ENCODE measurements at regions of chr1 and their contacts with region 1.

Region 1: DNA sequence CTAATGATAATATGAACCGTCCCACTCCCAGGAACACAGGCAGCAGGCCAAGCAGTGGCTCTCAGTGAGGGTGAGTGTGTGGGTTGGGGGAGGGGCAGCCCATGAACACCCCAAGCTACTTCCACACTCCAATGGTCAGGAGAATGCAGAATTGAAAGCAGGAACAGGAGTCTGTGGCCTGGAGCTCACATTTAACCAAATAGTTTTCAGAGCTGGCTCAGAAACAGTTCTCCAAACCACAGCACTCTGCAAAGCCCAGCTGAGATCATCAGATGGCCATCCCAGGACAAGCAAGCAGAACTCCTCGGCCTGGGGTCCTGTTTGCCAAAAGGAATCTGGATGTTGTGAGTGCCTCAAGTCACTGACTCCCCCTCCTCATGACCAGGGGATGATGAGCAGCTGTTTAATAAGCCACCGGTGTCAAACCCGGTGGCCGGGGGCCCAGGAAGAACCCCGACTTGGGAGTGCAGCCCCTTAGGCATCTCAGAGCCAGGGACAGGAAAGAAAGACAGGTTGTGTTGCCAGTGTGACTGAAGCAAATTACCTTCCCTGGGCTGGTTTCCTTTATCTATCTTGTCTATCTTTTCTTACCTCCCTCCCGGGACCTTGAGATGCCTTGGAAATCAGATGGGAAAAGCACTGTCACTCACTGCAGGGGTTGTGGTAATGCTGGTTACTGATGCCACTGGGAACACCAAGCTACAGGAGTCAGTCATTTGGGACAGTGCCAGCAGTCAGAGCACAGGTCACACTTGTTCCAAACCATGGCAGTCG is 20.4 kb downstream of the DEGS1 start:
- DNase-seq: peak; percentile 62
- H3K4me3 Mint-ChIP-seq: no peak overlapping the region
- H3K27ac Mint-ChIP-seq: no peak overlapping the region
- H3K4me1 Mint-ChIP-seq: peaks cover 21% of the 10 kb centered on the region
- H3K27me3 Mint-ChIP-seq: no peaks in the 10 kb centered on the region
- CTCF ChIP-seq: no peak

Region 2: GRCh38 chr1:224192082-224192788 is 11.2 kb before region 1 on chr1:
- CTCF ChIA-PET with region 1: interaction called, 4 read pairs
- POLR2A ChIA-PET with region 1: interaction called, 20 read pairs
- intact Hi-C with region 1: no loop called
- DNase-seq: no peak
- H3K4me3 Mint-ChIP-seq: no peak overlapping the region
- H3K27ac Mint-ChIP-seq: no peak overlapping the region
- H3K4me1 Mint-ChIP-seq: no peaks in the 10 kb centered on the region
- H3K27me3 Mint-ChIP-seq: no peaks in the 10 kb centered on the region
- CTCF ChIP-seq: no peak

Region 3: GRCh38 chr1:224213438-224214112 is 10.1 kb after region 1 on chr1:
- CTCF ChIA-PET with region 1: interaction called, 4 read pairs
- POLR2A ChIA-PET with region 1: interaction called, 16 read pairs
- intact Hi-C with region 1: no loop called
- DNase-seq: peak; percentile 33
- H3K4me3 Mint-ChIP-seq: no peak overlapping the region
- H3K27ac Mint-ChIP-seq: no peak overlapping the region
- H3K4me1 Mint-ChIP-seq: peaks cover 21% of the 10 kb centered on the region
- H3K27me3 Mint-ChIP-seq: no peaks in the 10 kb centered on the region
- CTCF ChIP-seq: no peak